ENCODE measurements at regions of chr5 and their contacts with region 1.

Region 1: DNA sequence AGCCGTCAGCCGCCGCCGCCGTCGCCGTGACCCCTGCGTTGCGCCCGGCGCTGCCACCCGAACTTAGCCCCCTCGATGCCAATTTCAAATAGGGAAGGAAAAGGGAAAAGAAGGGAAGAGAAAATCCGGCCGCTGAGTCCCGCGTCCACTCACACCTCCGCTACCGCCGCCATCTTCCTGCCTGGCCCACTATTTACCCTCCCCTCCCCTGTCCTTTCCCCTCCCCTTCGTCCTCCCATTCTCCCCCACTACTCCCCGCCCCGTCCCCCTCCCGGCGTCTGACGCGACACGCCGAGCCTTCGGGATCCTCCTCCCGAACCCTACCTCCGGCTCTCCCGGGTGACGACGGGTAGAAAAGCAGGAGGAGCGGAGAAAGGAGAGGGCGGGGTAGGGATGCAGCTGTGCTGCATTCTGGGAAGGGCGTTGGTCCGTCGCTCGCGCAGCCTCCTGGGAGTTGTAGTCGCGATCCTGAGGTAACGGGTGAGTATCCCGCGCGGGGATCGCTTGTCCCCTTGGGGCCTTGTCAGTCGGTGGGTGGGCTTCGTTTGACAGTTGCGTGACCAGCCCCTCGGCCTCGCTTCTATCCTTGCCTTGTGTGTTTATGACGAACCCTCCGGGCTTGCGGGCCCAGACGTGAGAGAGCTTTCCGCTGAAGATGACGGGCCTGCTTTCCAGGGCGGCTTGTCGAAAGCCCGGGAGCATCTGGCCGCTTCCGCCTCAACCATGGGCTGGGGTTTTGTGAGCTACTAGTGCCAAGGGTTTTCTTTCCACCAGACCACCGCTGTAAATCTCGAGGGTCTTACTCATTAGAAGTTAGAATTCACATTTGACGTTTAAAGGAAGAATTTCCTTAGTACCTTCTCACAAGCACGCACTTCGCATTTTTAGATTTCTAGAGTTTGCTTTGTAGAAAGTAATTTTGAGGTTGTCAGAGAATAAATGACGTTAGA is at the starts of genes CERT1 and POLK:
- DNase-seq: peak; percentile 95
- ATAC-seq: peak; percentile 96
- H3K4me3 ChIP-seq: peak within 1 kb of the TSS; percentile 83
- H3K27ac ChIP-seq: peak within 1 kb of the TSS; percentile 10; the same call in 1 of the 2 replicates
- H3K4me1 ChIP-seq: peaks cover 15% of the 10 kb centered on the region
- H3K27me3 ChIP-seq: no peaks in the 10 kb centered on the region
- CTCF ChIP-seq: no peak
- total RNA-seq, gene CERT1: 5.6 and 6.5 TPM in 2 replicates
- total RNA-seq, gene POLK: 6.5 and 9.0 TPM in 2 replicates

Region 2: GRCh38 chr5:75236322-75237316 is 275.1 kb before region 1 on chr5 and contains the start of gene ANKRD31:
- CTCF ChIA-PET with region 1: no interaction called
- POLR2A ChIA-PET with region 1: no interaction called
- intact Hi-C with region 1: loop called (anchors 2 kb)
- DNase-seq: peak; percentile 74
- ATAC-seq: peak; percentile 98
- H3K4me3 ChIP-seq: peak within 1 kb of the TSS; percentile 88
- H3K27ac ChIP-seq: no peak within 1 kb of the TSS
- H3K4me1 ChIP-seq: peaks cover 19% of the 10 kb centered on the region
- H3K27me3 ChIP-seq: no peaks in the 10 kb centered on the region
- CTCF ChIP-seq: peak; percentile 64
- total RNA-seq, gene ANKRD31: 0.12 and 0.26 TPM in 2 replicates

Region 3: GRCh38 chr5:75566710-75567309 is 55.1 kb after region 1 on chr5:
- CTCF ChIA-PET with region 1: no interaction called
- POLR2A ChIA-PET with region 1: no interaction called
- intact Hi-C with region 1: loop called (anchors 5 kb)
- DNase-seq: peak; percentile 88
- ATAC-seq: peak; percentile 66
- H3K4me3 ChIP-seq: peak overlapping the region; percentile 39
- H3K27ac ChIP-seq: peak overlapping the region; percentile 99
- H3K4me1 ChIP-seq: peaks cover 42% of the 10 kb centered on the region
- H3K27me3 ChIP-seq: no peaks in the 10 kb centered on the region
- CTCF ChIP-seq: no peak

Region 4: GRCh38 chr5:75681125-75681830 is 169.6 kb after region 1 on chr5:
- CTCF ChIA-PET with region 1: no interaction called
- POLR2A ChIA-PET with region 1: interaction called, 3 read pairs
- intact Hi-C with region 1: loop called (anchors 5 kb)
- DNase-seq: peak; percentile 57
- ATAC-seq: no peak
- H3K4me3 ChIP-seq: no peak overlapping the region
- H3K27ac ChIP-seq: no peak overlapping the region
- H3K4me1 ChIP-seq: peaks cover 6% of the 10 kb centered on the region
- H3K27me3 ChIP-seq: no peaks in the 10 kb centered on the region
- CTCF ChIP-seq: peak; percentile 66